Activated naive CD8-positive, alpha-beta T cell treated with anti-CD3 and anti-CD28 coated beads, Interleukin-2, amount 10 ng/mL, durations not matched to agents 7 days and 5 days (primary cell): ENCODE measurements at regions of chr6 and their contacts with region 1.

Region 1: DNA sequence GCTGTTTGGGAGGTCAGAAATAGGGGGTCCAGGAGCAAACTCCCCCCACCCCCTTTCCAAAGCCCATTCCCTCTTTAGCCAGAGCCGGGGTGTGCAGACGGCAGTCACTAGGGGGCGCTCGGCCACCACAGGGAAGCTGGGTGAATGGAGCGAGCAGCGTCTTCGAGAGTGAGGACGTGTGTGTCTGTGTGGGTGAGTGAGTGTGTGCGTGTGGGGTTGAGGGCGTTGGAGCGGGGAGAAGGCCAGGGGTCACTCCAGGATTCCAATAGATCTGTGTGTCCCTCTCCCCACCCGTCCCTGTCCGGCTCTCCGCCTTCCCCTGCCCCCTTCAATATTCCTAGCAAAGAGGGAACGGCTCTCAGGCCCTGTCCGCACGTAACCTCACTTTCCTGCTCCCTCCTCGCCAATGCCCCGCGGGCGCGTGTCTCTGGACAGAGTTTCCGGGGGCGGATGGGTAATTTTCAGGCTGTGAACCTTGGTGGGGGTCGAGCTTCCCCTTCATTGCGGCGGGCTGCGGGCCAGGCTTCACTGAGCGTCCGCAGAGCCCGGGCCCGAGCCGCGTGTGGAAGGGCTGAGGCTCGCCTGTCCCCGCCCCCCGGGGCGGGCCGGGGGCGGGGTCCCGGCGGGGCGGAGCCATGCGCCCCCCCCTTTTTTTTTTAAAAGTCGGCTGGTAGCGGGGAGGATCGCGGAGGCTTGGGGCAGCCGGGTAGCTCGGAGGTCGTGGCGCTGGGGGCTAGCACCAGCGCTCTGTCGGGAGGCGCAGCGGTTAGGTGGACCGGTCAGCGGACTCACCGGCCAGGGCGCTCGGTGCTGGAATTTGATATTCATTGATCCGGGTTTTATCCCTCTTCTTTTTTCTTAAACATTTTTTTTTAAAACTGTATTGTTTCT is at the start of gene VEGFA:
- DNase-seq: peak; percentile 92
- ATAC-seq: peak; percentile 67
- H3K4me3 Mint-ChIP-seq: peak within 1 kb of the TSS; percentile 98
- H3K27ac Mint-ChIP-seq: peak within 1 kb of the TSS; percentile 90
- H3K4me1 Mint-ChIP-seq: peaks cover 21% of the 10 kb centered on the region
- H3K27me3 Mint-ChIP-seq: peaks cover 8% of the 10 kb centered on the region
- total RNA-seq, gene VEGFA: 33.6 to 39.5 TPM

Region 2: GRCh38 chr6:43629505-43630300 is 140.1 kb before region 1 on chr6:
- POLR2A ChIA-PET with region 1: interaction called, 10 read pairs
- DNase-seq: peak; percentile 89
- ATAC-seq: peak; percentile 73
- H3K4me3 Mint-ChIP-seq: peak overlapping the region; percentile 100
- H3K27ac Mint-ChIP-seq: peak overlapping the region; percentile 95
- H3K4me1 Mint-ChIP-seq: peaks cover 34% of the 10 kb centered on the region
- H3K27me3 Mint-ChIP-seq: no peaks in the 10 kb centered on the region

Region 3: GRCh38 chr6:43635387-43636307 is 134.1 kb before region 1 on chr6 and contains the start of gene MAD2L1BP:
- POLR2A ChIA-PET with region 1: interaction called, 10 read pairs
- DNase-seq: peak; percentile 93
- ATAC-seq: peak; percentile 82
- H3K4me3 Mint-ChIP-seq: peak within 1 kb of the TSS; percentile 98
- H3K27ac Mint-ChIP-seq: peak within 1 kb of the TSS; percentile 96
- H3K4me1 Mint-ChIP-seq: peaks cover 43% of the 10 kb centered on the region
- H3K27me3 Mint-ChIP-seq: no peaks in the 10 kb centered on the region
- total RNA-seq, gene MAD2L1BP: 39.7 to 40.2 TPM

Region 4: GRCh38 chr6:43723737-43724295 is 46.0 kb before region 1 on chr6:
- POLR2A ChIA-PET with region 1: interaction called, 20 read pairs
- DNase-seq: peak; percentile 70
- ATAC-seq: peak; percentile 71
- H3K4me3 Mint-ChIP-seq: no peak overlapping the region
- H3K27ac Mint-ChIP-seq: no peak overlapping the region
- H3K4me1 Mint-ChIP-seq: peaks cover 20% of the 10 kb centered on the region
- H3K27me3 Mint-ChIP-seq: peaks cover 12% of the 10 kb centered on the region

Region 5: DNA sequence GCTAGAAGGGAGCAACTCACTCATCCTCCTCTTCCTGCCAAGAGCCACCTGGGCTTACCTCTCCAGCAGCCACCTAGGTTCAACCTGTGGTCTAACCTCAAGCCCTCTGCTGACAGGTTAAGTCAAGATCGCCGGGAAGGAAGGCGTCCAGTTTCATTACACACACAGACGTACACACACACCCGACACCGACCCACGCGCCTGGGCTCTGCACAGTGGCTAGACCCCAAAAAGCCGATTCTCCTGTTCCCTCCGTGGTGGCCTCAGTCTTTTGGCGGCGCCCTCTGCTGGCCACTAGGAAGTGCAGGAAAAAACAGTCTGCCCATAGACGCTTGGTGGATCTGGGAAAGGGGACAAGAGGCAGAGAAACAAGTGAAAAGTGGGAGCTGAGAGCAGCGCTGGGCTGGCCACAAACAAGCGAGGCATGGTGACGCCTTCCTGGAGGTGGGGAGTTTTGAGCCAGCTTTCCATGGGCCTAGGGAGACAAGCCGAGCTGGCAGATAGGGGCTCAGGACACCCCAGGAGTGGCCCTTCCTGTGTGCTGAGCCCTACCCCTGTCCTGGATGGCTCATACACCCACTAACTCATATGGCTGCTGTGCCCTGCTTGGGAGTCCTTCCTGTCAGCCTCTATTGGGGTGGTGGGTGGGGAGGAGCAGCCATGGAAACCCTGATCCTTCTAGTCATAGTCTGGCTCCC is 304.8 kb after region 1 on chr6:
- POLR2A ChIA-PET with region 1: interaction called, 34 read pairs
- DNase-seq: peak; percentile 83
- ATAC-seq: peak; percentile 62
- H3K4me3 Mint-ChIP-seq: peak overlapping the region; percentile 85
- H3K27ac Mint-ChIP-seq: peak overlapping the region; percentile 77
- H3K4me1 Mint-ChIP-seq: peaks cover 20% of the 10 kb centered on the region
- H3K27me3 Mint-ChIP-seq: peaks cover 10% of the 10 kb centered on the region

Region 6: DNA sequence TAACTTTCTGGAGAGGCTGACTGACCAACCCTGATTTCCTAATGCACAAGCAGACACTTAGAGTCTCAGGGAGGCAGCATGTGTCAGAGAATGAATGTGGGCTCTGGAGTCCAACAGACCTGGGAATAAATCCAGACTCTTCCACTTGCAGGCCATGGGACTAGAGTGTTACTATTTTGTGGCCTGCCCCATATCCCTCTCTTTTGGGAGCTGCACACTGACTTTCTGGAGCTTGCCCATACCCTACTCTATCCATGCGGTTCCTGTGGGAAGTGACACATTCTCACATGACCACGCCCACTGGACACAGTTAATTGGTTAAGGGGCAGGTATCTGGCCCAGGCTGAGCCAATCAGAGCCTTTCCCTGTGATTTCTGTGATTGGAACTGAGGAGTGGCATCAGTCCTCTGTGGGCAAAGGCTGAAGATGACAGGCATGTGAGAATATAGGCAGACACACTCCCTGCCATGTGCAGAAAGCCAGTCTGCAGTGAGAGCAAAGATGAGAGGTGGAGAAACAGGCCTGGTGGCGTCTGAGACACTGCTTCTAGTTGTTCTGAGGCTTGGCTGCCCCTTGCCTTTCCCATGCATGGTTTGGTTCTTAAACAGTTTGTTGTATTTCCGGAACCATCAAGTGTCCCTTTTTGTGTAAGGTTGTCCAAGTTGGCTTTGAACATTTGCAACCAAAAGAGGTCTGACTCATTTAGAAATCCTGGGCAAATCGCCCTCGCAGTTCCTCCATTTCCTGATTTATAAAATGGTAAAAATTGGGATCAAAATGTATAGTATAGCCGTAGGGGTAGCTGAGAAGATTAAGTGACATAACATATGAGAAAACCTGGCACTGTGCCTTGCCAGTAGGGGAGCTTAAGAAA is 743.3 kb after region 1 on chr6:
- POLR2A ChIA-PET with region 1: no interaction called
- DNase-seq: no peak
- ATAC-seq: no peak
- H3K4me3 Mint-ChIP-seq: no peak overlapping the region
- H3K27ac Mint-ChIP-seq: no peak overlapping the region
- H3K4me1 Mint-ChIP-seq: no peaks in the 10 kb centered on the region
- H3K27me3 Mint-ChIP-seq: peaks cover 23% of the 10 kb centered on the region